CD4-positive, alpha-beta memory T cell (primary cell): ENCODE measurements at regions of chr6 and their contacts with region 1.

Region 1: DNA sequence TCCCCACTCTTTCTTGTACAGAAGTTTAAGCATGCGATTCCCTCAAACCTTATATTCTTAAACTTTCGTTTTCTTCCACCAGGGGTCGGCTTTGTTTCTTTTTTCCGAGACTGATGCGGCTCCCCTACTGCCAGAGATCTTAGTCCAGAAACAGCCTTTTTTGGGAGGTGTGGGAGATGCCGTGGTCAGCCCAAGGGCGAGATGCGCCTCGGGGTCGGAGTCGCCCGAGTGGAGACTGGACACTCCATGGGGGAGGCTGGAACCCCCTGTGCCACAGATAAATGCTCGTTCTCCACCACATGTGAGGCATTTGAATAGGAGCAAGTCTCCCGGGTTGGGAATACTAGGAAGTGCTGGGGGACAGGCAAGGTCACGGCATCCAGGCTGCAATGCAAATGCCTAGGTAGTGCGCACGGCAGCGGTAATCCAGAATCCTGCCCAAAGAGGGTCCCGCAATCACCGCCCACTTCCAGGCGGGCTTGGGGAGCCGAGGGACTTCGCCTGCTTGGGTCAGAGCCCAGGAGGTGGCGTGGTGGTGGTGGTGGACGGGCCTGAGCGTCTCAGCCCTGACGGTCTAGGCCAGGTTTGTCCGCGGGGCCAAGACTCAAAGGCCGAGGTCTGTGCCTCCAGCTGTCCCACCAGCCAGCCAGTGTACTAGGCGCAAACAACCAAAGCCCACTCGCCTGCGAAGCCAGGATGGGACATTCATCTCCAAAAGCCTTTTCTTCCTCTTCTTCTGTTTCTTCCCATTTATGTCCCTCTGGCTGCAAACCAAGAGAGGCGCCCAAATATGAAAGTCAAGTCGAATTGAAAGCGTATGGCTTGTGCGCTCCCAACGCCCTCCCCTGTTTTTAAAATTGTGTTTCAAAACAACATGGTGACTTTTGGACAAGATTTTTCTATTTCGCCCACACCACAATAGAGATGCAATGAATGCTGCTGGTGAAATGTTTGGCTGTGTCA is 39.3 kb upstream of the OSTM1 start:
- DNase-seq: peak in 2 of 5 donors; percentile 18 to 28
- H3K4me3 ChIP-seq: peak overlapping the region in 1 of 2 donors; percentile 1
- H3K4me3 Mint-ChIP-seq: peak overlapping the region in 7 of 8 donors; percentile 57 to 95 (median 64)
- H3K27ac ChIP-seq: no peak overlapping the region
- H3K27ac Mint-ChIP-seq: no peak overlapping the region
- H3K4me1 ChIP-seq: peaks cover 48% of the 10 kb centered on the region
- H3K4me1 Mint-ChIP-seq: peaks cover 32 to 48% (median 40%) of the 10 kb centered on the region in 4 donors
- H3K27me3 ChIP-seq: peaks cover 62% of the 10 kb centered on the region
- H3K27me3 Mint-ChIP-seq: peaks cover 63 to 67% of the 10 kb centered on the region in 2 donors

Region 2: GRCh38 chr6:108157234-108157980 is 43.6 kb after region 1 on chr6:
- CTCF ChIA-PET with region 1: no interaction called
- POLR2A ChIA-PET with region 1: no interaction called
- intact Hi-C with region 1: loop called (anchors 5 kb)
- DNase-seq: no peak
- H3K4me3 ChIP-seq: peak overlapping the region in 1 of 2 donors; percentile 35
- H3K4me3 Mint-ChIP-seq: peak overlapping the region; percentile 44 to 79 (median 70)
- H3K27ac ChIP-seq: no peak overlapping the region
- H3K27ac Mint-ChIP-seq: no peak overlapping the region
- H3K4me1 ChIP-seq: peaks cover 18% of the 10 kb centered on the region
- H3K4me1 Mint-ChIP-seq: peaks cover 9 to 23% (median 14%) of the 10 kb centered on the region in 4 donors
- H3K27me3 ChIP-seq: peaks cover 49% of the 10 kb centered on the region
- H3K27me3 Mint-ChIP-seq: peaks cover 68 to 80% of the 10 kb centered on the region in 2 donors

Region 3: DNA sequence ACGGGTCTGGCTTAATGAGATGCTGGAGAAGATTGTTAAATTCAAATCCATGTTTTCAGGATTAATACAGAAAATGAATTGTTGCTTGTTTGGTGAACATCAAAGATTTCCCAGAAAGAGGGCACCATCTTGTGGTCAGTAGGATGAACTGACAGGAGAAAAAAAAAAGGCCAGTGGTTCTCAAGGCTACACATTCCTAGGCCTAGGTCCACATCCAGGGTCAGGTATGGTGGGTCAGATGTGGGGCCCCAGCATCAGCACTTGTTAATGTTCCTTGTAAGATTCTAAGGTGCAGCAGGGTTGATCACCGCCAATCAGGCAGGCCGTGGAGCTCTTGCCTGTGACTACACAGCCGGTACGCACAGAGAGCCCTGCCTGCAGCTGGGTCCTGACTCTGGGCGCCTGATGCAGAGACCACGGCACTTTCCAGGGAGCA is 412.9 kb after region 1 on chr6:
- CTCF ChIA-PET with region 1: interaction called, 7 read pairs
- POLR2A ChIA-PET with region 1: no interaction called
- intact Hi-C with region 1: loop called (anchors 1 kb)
- DNase-seq: peak in 2 of 5 donors; percentile 15 to 16
- H3K4me3 ChIP-seq: no peak overlapping the region
- H3K4me3 Mint-ChIP-seq: no peak overlapping the region
- H3K27ac ChIP-seq: no peak overlapping the region
- H3K27ac Mint-ChIP-seq: no peak overlapping the region
- H3K4me1 ChIP-seq: no peaks in the 10 kb centered on the region
- H3K4me1 Mint-ChIP-seq: no peaks in the 10 kb centered on the region
- H3K27me3 ChIP-seq: no peaks in the 10 kb centered on the region
- H3K27me3 Mint-ChIP-seq: no peaks in the 10 kb centered on the region